ENCODE measurements at regions of chr7 and their contacts with region 1.

Region 1: DNA sequence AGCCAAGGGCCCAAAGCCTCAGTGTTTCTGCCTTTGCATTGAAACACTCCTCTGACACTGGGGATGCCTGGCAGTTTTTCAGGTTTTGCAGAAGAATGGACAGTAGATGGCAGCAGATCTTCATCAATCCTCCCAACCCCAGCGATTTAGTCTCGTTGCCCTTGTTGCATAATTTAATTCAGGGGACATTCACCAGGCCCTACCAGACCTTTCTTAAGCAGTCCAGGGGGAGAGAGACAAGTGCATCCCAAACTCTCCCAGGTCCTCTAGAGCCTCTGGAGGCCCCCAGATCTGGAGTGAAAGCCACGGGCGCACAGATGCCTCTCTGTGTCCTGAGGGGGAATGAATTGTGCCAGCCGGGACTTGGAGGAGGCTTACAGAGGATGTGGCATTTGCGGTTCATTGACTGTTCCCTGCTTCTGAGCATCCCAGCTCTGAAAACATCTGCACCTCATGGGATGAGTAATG is 29.6 kb downstream of the MINDY4 start:
- DNase-seq: peak; percentile 61
- H3K4me3 ChIP-seq: no peak overlapping the region
- H3K27ac ChIP-seq: no peak overlapping the region
- H3K4me1 ChIP-seq: peaks cover 4% of the 10 kb centered on the region
- H3K27me3 ChIP-seq: no peaks in the 10 kb centered on the region
- CTCF ChIP-seq: peak; percentile 65

Region 2: GRCh38 chr7:30660331-30661255 is 140.2 kb before region 1 on chr7:
- intact Hi-C with region 1: no loop called
- DNase-seq: no peak
- H3K4me3 ChIP-seq: no peak overlapping the region
- H3K27ac ChIP-seq: no peak overlapping the region
- H3K4me1 ChIP-seq: no peaks in the 10 kb centered on the region
- H3K27me3 ChIP-seq: no peaks in the 10 kb centered on the region
- CTCF ChIP-seq: no peak

Region 3: GRCh38 chr7:30977896-30978564 is 177.2 kb after region 1 on chr7:
- intact Hi-C with region 1: loop called (anchors 2 kb)
- DNase-seq: peak; percentile 70
- H3K4me3 ChIP-seq: no peak overlapping the region
- H3K27ac ChIP-seq: no peak overlapping the region
- H3K4me1 ChIP-seq: no peaks in the 10 kb centered on the region
- H3K27me3 ChIP-seq: no peaks in the 10 kb centered on the region
- CTCF ChIP-seq: peak; percentile 54

Region 4: GRCh38 chr7:31122649-31123058 is 321.8 kb after region 1 on chr7:
- intact Hi-C with region 1: loop called (anchors 5 kb)
- DNase-seq: peak; percentile 54
- H3K4me3 ChIP-seq: no peak overlapping the region
- H3K27ac ChIP-seq: no peak overlapping the region
- H3K4me1 ChIP-seq: no peaks in the 10 kb centered on the region
- H3K27me3 ChIP-seq: no peaks in the 10 kb centered on the region
- CTCF ChIP-seq: peak; percentile 69